CD8-positive, alpha-beta T cell (primary cell): ENCODE measurements at regions of chr10 and their contacts with region 1.

Region 1: GRCh38 chr10:451021-451471 is 238.4 kb downstream of the DIP2C start:
- DNase-seq: peak; percentile 44 to 84 (median 69)
- ATAC-seq: peak; percentile 98
- H3K4me3 ChIP-seq: peak overlapping the region in 1 of 2 experiments; percentile 34
- H3K4me3 Mint-ChIP-seq: peak overlapping the region; percentile 73
- H3K27ac ChIP-seq: peak overlapping the region in 1 of 2 experiments; percentile 59
- H3K27ac Mint-ChIP-seq: peak overlapping the region; percentile 89
- H3K4me1 ChIP-seq: peaks cover 50% of the 10 kb centered on the region
- H3K4me1 Mint-ChIP-seq: peaks cover 69% of the 10 kb centered on the region
- H3K27me3 ChIP-seq: no peaks in the 10 kb centered on the region
- H3K27me3 Mint-ChIP-seq: no peaks in the 10 kb centered on the region
- CTCF ChIP-seq: no peak

Region 2: DNA sequence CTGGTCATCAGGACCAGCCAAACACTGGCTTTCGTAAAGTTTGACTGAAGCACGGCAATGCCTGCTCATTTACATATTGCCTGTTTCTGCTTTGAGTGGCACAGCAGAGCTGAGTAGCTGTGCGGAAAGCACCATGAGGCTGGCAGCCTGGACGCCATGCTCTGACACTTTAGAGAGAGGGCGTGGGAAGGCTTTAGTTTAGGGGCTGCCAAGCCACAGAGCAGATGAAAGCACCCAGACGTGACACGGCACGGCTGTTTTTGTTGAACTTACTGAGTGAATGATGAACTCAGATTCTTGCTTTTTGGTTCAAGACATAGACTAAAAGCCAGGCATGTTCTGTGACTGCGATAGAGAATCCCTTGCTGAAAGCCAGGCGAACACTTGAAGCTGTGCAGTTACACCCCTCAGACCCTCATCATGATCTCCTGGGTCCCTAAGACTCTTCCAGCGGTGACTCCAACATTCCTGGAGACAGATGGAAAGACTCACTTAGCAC is 133.7 kb before region 1 on chr10:
- CTCF ChIA-PET with region 1: no interaction called
- POLR2A ChIA-PET with region 1: no interaction called
- intact Hi-C with region 1: loop called in 1 of 2 experiments (anchors 5 kb)
- DNase-seq: peak in 6 of 9 experiments; percentile 18 to 76 (median 65)
- ATAC-seq: peak; percentile 98
- H3K4me3 ChIP-seq: no peak overlapping the region
- H3K4me3 Mint-ChIP-seq: peak overlapping the region; percentile 30
- H3K27ac ChIP-seq: no peak overlapping the region
- H3K27ac Mint-ChIP-seq: peak overlapping the region; percentile 90
- H3K4me1 ChIP-seq: peaks cover 28% of the 10 kb centered on the region
- H3K4me1 Mint-ChIP-seq: peaks cover 32% of the 10 kb centered on the region
- H3K27me3 ChIP-seq: no peaks in the 10 kb centered on the region
- H3K27me3 Mint-ChIP-seq: no peaks in the 10 kb centered on the region
- CTCF ChIP-seq: no peak

Region 3: DNA sequence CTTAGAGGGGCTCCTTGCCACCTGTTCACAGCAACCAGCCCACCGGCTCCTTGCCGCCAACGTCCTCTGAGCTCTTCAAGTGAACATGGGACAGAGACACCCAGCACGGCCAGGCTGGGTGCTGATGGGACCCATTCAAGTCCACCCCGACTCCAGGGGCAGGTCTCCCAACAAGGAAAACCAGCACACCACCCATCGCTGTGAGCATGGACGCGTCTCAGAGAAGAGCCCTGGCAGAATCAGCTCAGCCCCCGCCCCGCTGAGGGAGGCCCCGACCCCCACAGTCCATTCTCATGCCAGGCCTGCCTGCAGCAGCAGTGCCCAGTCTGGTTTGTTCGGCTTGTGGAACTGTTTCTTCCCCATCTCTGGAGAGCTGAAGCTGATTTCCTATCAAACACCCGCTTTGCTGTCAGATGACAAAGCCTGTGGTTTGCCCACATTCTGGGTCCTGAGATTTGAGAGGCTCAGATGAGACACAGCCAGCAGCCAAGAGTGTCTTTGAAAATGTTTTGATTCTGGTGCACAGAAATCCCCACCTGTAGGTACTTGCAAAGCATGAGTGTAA is 99.2 kb before region 1 on chr10:
- CTCF ChIA-PET with region 1: no interaction called
- POLR2A ChIA-PET with region 1: interaction called, 3 read pairs
- intact Hi-C with region 1: loop called in 1 of 2 experiments (anchors 5 kb)
- DNase-seq: peak in 8 of 9 experiments; percentile 14 to 78 (median 54)
- ATAC-seq: peak; percentile 88
- H3K4me3 ChIP-seq: no peak overlapping the region
- H3K4me3 Mint-ChIP-seq: peak overlapping the region; percentile 72
- H3K27ac ChIP-seq: peak overlapping the region in 1 of 2 experiments; percentile 10
- H3K27ac Mint-ChIP-seq: peak overlapping the region; percentile 88
- H3K4me1 ChIP-seq: peaks cover 17% of the 10 kb centered on the region
- H3K4me1 Mint-ChIP-seq: peaks cover 25% of the 10 kb centered on the region
- H3K27me3 ChIP-seq: no peaks in the 10 kb centered on the region
- H3K27me3 Mint-ChIP-seq: no peaks in the 10 kb centered on the region
- CTCF ChIP-seq: no peak

Region 4: DNA sequence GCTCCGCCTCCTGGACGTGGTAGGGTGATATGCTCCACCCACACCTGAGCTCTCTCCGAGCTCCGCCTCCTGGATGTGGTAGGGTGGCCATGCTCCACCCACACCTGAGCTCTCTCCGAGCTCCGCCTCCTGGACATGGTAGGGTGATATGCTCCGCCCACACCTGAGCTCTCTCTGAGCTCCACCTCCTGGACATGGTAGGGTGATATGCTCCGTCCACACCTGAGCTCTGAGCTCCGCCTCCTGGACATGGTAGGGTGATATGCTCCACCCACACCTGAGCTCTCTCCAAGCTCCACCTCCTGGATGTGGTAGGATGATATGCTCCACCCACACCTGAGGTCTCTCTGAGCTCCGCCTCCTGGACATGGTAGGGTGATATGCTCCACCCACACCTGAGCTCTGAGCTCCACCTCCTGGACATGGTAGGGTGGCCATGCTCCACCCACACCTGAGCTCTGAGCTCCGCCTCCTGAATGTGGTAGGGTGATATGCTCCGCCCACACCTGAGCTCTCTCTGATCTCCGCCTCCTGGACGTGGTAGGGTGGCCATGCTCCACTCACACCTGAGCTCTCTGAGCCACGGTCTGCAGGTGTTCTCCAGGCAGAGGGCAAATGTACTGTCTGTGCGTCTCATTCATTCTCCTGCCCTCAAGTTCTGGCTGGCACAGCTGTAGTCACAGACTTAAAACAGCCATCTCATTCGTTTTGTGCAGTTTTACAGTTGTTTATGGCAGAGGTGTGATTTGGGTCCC is 14.0 kb before region 1 on chr10:
- CTCF ChIA-PET with region 1: interaction called, 3 read pairs
- POLR2A ChIA-PET with region 1: interaction called, 7 read pairs
- intact Hi-C with region 1: loop called in 1 of 2 experiments (anchors 2 kb)
- DNase-seq: peak in 2 of 9 experiments; percentile 15 to 35
- ATAC-seq: no peak
- H3K4me3 ChIP-seq: no peak overlapping the region
- H3K4me3 Mint-ChIP-seq: peak overlapping the region; percentile 23
- H3K27ac ChIP-seq: no peak overlapping the region
- H3K27ac Mint-ChIP-seq: peak overlapping the region; percentile 76
- H3K4me1 ChIP-seq: peaks cover 35% of the 10 kb centered on the region
- H3K4me1 Mint-ChIP-seq: peaks cover 36% of the 10 kb centered on the region
- H3K27me3 ChIP-seq: no peaks in the 10 kb centered on the region
- H3K27me3 Mint-ChIP-seq: no peaks in the 10 kb centered on the region
- CTCF ChIP-seq: no peak

Region 5: DNA sequence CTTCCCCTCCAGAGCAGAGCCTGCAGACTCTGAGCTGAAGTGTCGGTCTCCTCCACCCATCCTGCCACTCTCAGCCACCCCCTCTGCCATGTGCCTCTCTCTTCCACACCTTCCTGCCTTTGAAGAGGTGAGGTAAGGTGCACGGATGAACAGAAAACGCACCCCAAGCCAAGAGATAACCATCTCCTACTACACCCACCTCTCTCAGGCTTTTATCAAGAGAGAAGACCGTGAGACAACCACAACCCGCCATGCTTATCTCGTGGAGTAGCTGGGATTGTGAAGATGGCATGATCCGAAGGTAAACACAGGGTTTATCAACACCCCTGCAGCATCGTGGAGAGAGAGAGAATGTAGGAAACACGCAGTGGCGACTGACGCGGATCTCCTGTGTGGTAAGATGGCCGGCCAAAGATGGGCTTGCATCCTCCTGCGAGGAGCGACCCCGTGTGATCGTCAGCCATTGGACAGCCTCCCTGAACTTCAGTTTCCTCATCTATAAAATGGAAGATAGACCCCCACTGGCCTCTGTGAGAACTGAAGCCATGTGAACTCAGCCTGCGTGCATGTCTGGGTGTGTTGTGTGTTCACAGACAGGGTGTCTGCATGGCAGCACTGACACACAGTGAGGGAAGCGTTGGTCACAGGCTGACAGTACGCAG is 19.4 kb after region 1 on chr10:
- CTCF ChIA-PET with region 1: interaction called, 5 read pairs
- POLR2A ChIA-PET with region 1: interaction called, 22 read pairs
- intact Hi-C with region 1: loop called (anchors 1 kb)
- DNase-seq: peak; percentile 22 to 79 (median 51)
- ATAC-seq: peak; percentile 84
- H3K4me3 ChIP-seq: peak overlapping the region; percentile 2 to 14
- H3K4me3 Mint-ChIP-seq: peak overlapping the region; percentile 77
- H3K27ac ChIP-seq: peak overlapping the region; percentile 35 to 39
- H3K27ac Mint-ChIP-seq: peak overlapping the region; percentile 95
- H3K4me1 ChIP-seq: peaks cover 24% of the 10 kb centered on the region
- H3K4me1 Mint-ChIP-seq: peaks cover 29% of the 10 kb centered on the region
- H3K27me3 ChIP-seq: no peaks in the 10 kb centered on the region
- H3K27me3 Mint-ChIP-seq: no peaks in the 10 kb centered on the region
- CTCF ChIP-seq: peak; percentile 42

Region 6: GRCh38 chr10:484925-485661 is 34.0 kb after region 1 on chr10:
- CTCF ChIA-PET with region 1: no interaction called
- POLR2A ChIA-PET with region 1: no interaction called
- intact Hi-C with region 1: loop called in 1 of 2 experiments (anchors 5 kb)
- DNase-seq: peak in 5 of 9 experiments; percentile 19 to 70 (median 44)
- ATAC-seq: peak; percentile 80
- H3K4me3 ChIP-seq: peak overlapping the region; percentile 53 to 63
- H3K4me3 Mint-ChIP-seq: peak overlapping the region; percentile 83
- H3K27ac ChIP-seq: peak overlapping the region; percentile 76 to 82
- H3K27ac Mint-ChIP-seq: peak overlapping the region; percentile 93
- H3K4me1 ChIP-seq: no peaks in the 10 kb centered on the region
- H3K4me1 Mint-ChIP-seq: peaks cover 11% of the 10 kb centered on the region
- H3K27me3 ChIP-seq: no peaks in the 10 kb centered on the region
- H3K27me3 Mint-ChIP-seq: peaks cover under 1% of the 10 kb centered on the region
- CTCF ChIP-seq: no peak

Region 7: DNA sequence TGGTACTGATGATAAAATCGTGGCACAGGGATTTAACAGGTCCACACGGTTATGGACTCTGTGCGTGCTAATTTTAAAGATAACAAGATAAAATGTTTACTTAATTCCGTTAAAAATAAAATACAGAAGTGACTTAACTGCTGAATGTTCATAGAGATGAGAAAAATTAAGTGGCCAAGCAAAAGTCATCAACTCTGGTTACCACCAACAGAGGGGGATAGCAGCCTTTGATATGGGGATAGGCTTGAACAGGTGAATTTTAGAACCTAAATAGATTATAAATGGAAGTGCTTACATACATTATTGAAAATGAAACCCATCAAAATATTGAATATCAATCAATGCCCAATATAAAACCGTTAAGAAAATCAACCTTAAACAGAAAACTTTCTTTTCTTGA is 850.1 kb after region 1 on chr10:
- CTCF ChIA-PET with region 1: no interaction called
- POLR2A ChIA-PET with region 1: no interaction called
- intact Hi-C with region 1: no loop called
- DNase-seq: no peak
- ATAC-seq: no peak
- H3K4me3 ChIP-seq: no peak overlapping the region
- H3K4me3 Mint-ChIP-seq: no peak overlapping the region
- H3K27ac ChIP-seq: no peak overlapping the region
- H3K27ac Mint-ChIP-seq: no peak overlapping the region
- H3K4me1 ChIP-seq: no peaks in the 10 kb centered on the region
- H3K4me1 Mint-ChIP-seq: peaks cover 9% of the 10 kb centered on the region
- H3K27me3 ChIP-seq: no peaks in the 10 kb centered on the region
- H3K27me3 Mint-ChIP-seq: peaks cover 17% of the 10 kb centered on the region
- CTCF ChIP-seq: no peak